Ascending aorta (tissue), 2 donors: ENCODE measurements at regions of chr10 and their contacts with region 1.

Region 1: DNA sequence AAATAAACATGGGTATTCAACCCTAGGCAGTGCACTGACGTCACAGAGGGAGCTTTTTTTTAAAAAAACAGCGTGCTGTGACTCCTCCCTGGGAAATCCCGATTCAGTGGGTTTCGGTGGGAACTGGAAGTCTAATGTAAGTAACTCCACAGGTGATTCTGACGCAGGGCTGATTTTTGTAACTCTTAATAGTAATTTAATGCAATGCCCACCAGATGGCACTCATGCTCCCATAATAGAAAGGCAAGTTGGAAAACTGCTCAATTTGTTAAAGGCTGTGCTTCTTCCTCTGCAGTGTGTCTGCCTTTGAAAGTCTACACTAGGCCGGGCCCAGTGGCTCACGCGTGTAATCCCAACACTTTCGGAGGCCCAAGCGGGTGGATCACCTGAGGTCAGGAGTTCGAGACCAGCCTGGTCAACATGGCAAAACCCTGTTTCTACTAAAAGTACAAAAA is 10.9 kb upstream of the RSU1 start:
- DNase-seq: peak in 1 of 2 donors; percentile 80
- H3K4me3 ChIP-seq: peak overlapping the region; percentile 29 to 55
- H3K27ac ChIP-seq: peak overlapping the region; percentile 69 to 74
- H3K4me1 ChIP-seq: peaks cover 6 to 16% of the 10 kb centered on the region in 2 donors
- H3K27me3 ChIP-seq: no peaks in the 10 kb centered on the region
- CTCF ChIP-seq: peak; percentile 39 to 63 (median 49)

Region 2: DNA sequence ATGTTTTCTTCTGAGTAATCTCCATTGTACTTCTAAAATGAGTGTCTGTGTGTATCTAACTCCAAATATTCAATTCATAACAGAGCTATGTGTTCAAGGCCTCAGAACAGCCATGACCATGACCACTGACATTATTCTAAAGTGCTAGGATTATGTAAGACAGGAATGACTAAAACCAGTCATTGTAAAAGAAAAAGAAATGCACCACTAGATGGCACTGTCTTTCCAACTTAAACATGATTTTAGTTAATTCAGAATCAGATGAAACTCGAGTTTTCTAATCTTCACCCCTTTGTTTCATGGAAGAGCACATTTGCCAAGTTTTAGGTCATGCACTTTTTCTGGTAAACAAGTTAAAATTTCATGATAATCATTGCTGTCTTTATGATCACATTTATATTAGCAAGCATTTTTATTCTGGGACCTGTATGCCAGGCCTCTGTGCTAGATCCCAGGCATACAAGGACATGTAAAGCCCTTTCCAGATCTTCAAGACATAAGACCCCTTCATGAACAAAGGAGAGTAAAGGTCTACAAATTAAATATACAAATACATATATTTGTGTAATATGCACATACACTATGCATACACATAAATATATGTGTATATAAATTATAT is 15.2 kb after region 1 on chr10:
- intact Hi-C with region 1: loop called (anchors 1 kb)
- DNase-seq: no peak
- H3K4me3 ChIP-seq: no peak overlapping the region
- H3K27ac ChIP-seq: no peak overlapping the region
- H3K4me1 ChIP-seq: peaks cover 5 to 13% of the 10 kb centered on the region in 2 donors
- H3K27me3 ChIP-seq: no peaks in the 10 kb centered on the region
- CTCF ChIP-seq: peak; percentile 62 to 69 (median 67)

Region 3: DNA sequence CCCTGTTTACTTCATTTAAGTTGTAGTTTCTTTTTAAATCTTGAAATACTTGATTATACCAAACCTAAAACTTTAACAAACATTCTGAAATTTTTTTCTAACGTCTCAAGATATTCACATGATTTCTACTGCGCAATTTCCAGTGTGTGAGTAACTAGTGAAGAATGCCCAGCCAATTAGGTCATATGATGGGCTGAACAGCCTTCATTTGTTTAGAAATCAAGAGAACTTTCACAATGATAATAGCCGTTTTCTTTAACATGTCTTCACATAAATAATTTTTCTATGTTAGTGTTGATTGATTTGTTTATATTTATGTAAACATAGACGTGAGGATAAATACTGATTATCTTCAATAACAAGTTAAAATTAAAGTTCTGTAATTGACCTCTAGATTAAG is 837.6 kb after region 1 on chr10:
- intact Hi-C with region 1: loop called (anchors 10 kb)
- DNase-seq: no peak
- H3K4me3 ChIP-seq: peak overlapping the region in 1 of 2 donors; percentile 36
- H3K27ac ChIP-seq: peak overlapping the region; percentile 50 to 79
- H3K4me1 ChIP-seq: peaks cover 4 to 9% of the 10 kb centered on the region in 2 donors
- H3K27me3 ChIP-seq: no peaks in the 10 kb centered on the region
- CTCF ChIP-seq: no peak